PC-3 (cell line): ENCODE measurements at regions of chr14 and their contacts with region 1.

Region 1: DNA sequence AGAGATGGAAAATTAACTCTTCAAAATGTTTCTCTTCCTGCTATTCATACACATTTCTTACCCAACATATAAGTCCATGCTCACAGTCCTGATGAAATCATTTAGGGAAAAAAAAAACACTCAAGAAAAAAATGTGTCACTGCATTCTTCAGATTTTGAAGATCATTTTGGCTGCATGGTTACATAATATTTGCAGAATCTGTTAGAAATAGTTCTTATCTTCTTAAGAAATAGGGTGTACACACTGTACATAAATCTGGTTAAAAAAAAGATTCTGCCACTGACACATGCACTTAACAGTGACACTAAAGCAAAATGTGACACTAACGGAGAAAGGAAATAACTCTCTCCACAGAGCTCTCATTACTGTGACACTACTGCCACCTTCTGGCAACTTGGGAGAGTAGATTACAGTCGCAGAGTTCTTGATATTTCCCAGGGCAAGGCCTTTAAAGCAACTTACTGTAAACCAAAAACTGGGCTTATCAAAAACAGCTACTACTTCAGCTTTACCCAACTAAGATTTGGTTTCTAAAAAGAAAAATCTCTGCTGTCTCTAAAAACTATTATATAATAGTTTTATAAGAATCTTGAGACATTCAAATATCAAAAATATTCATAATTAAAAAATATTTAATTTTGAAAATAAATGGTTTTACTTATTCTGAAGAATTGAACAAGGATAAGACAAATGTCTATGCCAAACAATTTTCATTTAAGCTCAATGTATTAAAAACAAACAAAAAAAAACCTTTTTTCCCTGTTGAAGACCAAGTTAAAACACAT is 65.0 kb downstream of the SETD3 start:
- DNase-seq: peak; percentile 88
- ATAC-seq: peak; percentile 94
- H3K4me3 ChIP-seq: no peak overlapping the region
- H3K27ac ChIP-seq: no peak overlapping the region
- H3K4me1 ChIP-seq: no peaks in the 10 kb centered on the region
- H3K27me3 ChIP-seq: no peaks in the 10 kb centered on the region
- CTCF ChIP-seq: peak; percentile 90

Region 2: DNA sequence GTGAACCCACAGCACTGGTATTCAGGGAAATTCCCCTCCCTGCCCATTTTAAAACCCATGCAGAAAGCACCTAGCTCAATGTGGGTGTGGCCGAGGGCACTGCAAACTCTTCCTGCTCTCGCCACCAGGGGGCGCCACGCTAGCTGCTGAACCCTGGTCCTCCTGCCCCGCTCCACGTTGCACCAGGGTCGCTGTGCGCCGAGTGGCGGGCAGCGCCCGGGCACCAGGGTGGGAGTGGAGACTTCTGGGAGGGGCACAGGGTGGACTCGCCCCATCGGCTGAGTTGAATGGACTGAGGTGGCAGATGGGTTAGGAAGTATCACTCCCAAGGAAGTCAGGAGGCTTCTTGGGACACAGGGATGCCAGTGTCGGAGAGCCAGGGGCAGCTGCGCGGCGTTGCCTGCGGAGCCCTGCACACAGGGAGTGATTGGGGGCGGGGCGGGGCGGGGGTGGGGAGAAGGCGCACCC is 95.5 kb before region 1 on chr14:
- CTCF ChIA-PET with region 1: interaction called, 13 read pairs
- POLR2A ChIA-PET with region 1: no interaction called
- intact Hi-C with region 1: loop called (anchors 2 kb)
- DNase-seq: peak; percentile 59
- ATAC-seq: peak; percentile 76
- H3K4me3 ChIP-seq: no peak overlapping the region
- H3K27ac ChIP-seq: no peak overlapping the region
- H3K4me1 ChIP-seq: no peaks in the 10 kb centered on the region
- H3K27me3 ChIP-seq: peaks cover 4% of the 10 kb centered on the region; the same call in 1 of the 2 replicates
- CTCF ChIP-seq: peak; percentile 95

Region 3: DNA sequence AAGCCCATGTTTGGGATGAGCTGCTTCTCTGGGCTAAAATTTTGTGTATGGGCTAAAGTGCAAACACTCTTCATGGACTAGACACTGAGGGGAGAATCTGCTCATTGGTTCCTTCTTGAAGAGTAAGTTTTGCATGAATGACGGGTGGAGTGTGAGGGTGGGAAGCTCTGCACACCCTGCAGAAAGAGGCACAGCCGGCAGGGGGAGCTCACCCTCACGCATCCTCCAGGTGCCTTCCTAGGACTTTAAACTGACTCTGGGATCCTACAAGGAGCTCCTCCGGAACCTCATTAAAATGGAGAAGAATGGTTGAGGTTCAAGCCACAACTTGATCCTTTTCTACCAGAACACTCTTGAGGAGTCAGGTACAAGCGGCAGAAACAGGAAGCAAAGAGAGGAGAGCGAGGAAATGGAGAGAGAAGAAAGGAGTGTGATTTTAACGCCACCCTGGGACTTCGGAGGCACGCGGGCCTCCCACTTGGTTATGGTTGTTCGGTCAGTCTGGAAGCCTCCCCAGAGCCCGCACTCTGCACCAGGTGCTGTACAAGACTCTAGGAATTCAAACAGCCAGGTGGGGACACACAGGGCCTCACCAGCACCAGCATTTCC is 22.5 kb before region 1 on chr14:
- CTCF ChIA-PET with region 1: interaction called, 16 read pairs
- POLR2A ChIA-PET with region 1: no interaction called
- intact Hi-C with region 1: loop called (anchors 1 kb)
- DNase-seq: peak; percentile 64
- ATAC-seq: peak; percentile 57
- H3K4me3 ChIP-seq: no peak overlapping the region
- H3K27ac ChIP-seq: no peak overlapping the region
- H3K4me1 ChIP-seq: peaks cover 19% of the 10 kb centered on the region
- H3K27me3 ChIP-seq: no peaks in the 10 kb centered on the region
- CTCF ChIP-seq: peak; percentile 86